ENCODE measurements at regions of chr5 and their contacts with region 1.

Region 1: GRCh38 chr5:115098041-115098702 is 71.5 kb downstream of the TRIM36 start:
- DNase-seq: no peak
- ATAC-seq: peak; percentile 69

Region 2: GRCh38 chr5:115214541-115214940 is 116.4 kb after region 1 on chr5:
- intact Hi-C with region 1: no loop called
- DNase-seq: no peak
- ATAC-seq: no peak

Region 3: GRCh38 chr5:115231598-115231997 is 133.4 kb after region 1 on chr5:
- intact Hi-C with region 1: loop called (anchors 10 kb)
- DNase-seq: no peak
- ATAC-seq: no peak

Measured in sciatic nerve (tissue), 2 donors.